IMR-90 (cell line): ENCODE measurements at regions of chr9 and their contacts with region 1.

Region 1: GRCh38 chr9:21252721-21253547 is 13.1 kb upstream of the IFNA14 start:
- DNase-seq: peak; percentile 14
- ATAC-seq: peak; percentile 62; the same call in 1 of the 2 replicates
- H3K4me3 ChIP-seq: no peak overlapping the region
- H3K27ac ChIP-seq: no peak overlapping the region
- H3K4me1 ChIP-seq: 0 out of 2 replicates have a peak, but pooled peaks cover 1% of the 10 kb centered on the region
- H3K27me3 ChIP-seq: peaks cover 19% of the 10 kb centered on the region
- CTCF ChIP-seq: peak; percentile 34
- POLR2A ChIP-seq: no peak
- RAD21 ChIP-seq: 0 out of 2 replicates have a peak, but pooled peaks have one; percentile 17

Region 2: GRCh38 chr9:21234153-21234687 is 18.7 kb before region 1 on chr9:
- CTCF ChIA-PET with region 1: interaction called, 10 read pairs
- POLR2A ChIA-PET with region 1: no interaction called
- dilution Hi-C with region 1: no loop called
- in situ Hi-C with region 1: no loop called
- intact Hi-C with region 1: no loop called
- DNase-seq: no peak
- ATAC-seq: no peak
- H3K4me3 ChIP-seq: no peak overlapping the region
- H3K27ac ChIP-seq: no peak overlapping the region
- H3K4me1 ChIP-seq: no peaks in the 10 kb centered on the region
- H3K27me3 ChIP-seq: peaks cover 2% of the 10 kb centered on the region; the same call in 1 of the 2 replicates
- CTCF ChIP-seq: no peak
- POLR2A ChIP-seq: no peak
- RAD21 ChIP-seq: no peak